CD4-positive, alpha-beta memory T cell (primary cell): ENCODE measurements at regions of chr7 and their contacts with region 1.

Region 1: DNA sequence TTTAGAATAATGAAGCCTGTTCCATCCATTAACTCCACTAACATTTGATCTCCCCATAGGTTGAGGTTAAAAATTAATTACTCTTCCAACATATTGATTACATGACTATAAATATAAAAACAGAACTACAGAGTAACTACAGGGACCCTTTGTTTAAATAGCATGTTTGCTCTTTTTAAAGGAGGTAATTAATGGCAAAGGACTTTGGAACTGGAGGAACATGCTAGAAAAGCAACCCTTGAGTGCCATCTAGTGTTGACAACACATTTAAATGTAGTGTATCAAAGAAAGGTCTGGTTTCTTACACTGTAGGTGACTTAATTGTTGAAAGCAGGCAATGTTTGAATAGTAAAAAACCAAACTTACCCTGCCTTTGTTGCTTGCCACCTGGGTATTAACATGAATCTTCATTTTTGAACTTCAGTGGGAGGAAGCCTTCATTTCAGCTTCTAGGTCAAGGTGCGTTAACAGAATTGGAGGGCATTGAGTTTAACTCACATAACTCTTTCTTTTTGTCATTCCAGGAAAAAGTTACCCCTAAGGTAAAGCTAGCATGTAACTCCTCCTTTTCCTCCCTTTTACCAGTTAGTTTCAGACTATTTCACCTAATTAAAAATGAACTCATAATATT is 52.6 kb upstream of the CAPZA2 start:
- DNase-seq: peak in 4 of 5 donors; percentile 16 to 34 (median 25)
- H3K4me3 ChIP-seq: no peak overlapping the region
- H3K4me3 Mint-ChIP-seq: no peak overlapping the region
- H3K27ac ChIP-seq: no peak overlapping the region
- H3K27ac Mint-ChIP-seq: no peak overlapping the region
- H3K4me1 ChIP-seq: no peaks in the 10 kb centered on the region
- H3K4me1 Mint-ChIP-seq: no peaks in the 10 kb centered on the region
- H3K27me3 ChIP-seq: no peaks in the 10 kb centered on the region
- H3K27me3 Mint-ChIP-seq: no peaks in the 10 kb centered on the region

Region 2: GRCh38 chr7:116138202-116138801 is 671.4 kb before region 1 on chr7:
- CTCF ChIA-PET with region 1: no interaction called
- POLR2A ChIA-PET with region 1: no interaction called
- intact Hi-C with region 1: loop called (anchors 1 kb)
- DNase-seq: peak in 4 of 5 donors; percentile 31 to 40 (median 34)
- H3K4me3 ChIP-seq: no peak overlapping the region
- H3K4me3 Mint-ChIP-seq: no peak overlapping the region
- H3K27ac ChIP-seq: no peak overlapping the region
- H3K27ac Mint-ChIP-seq: no peak overlapping the region
- H3K4me1 ChIP-seq: peaks cover 3% of the 10 kb centered on the region
- H3K4me1 Mint-ChIP-seq: peaks cover 5 to 10% (median 6%) of the 10 kb centered on the region in 4 donors
- H3K27me3 ChIP-seq: no peaks in the 10 kb centered on the region
- H3K27me3 Mint-ChIP-seq: peaks cover 2 to 7% of the 10 kb centered on the region in 2 donors

Region 3: DNA sequence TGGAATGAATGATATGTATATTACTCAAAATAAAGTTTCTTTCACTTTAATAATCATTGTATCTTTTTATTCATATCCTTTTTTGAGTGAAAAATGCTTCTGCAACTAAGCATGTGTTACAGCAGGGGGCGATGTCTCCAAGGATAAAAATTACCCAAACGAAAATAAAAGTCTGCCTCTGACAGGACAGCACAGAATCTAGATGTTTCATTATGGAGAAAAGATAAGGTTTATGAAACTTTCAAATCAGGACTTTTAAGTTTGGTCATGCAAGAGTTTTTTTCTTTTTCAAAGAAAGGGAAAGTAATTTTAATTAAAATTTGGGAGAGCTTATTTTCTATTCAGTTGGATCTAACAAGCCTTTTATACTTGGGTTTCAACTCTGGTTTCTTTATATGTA is 551.0 kb before region 1 on chr7:
- CTCF ChIA-PET with region 1: no interaction called
- POLR2A ChIA-PET with region 1: no interaction called
- intact Hi-C with region 1: loop called (anchors 1 kb)
- DNase-seq: peak in 4 of 5 donors; percentile 31 to 51 (median 40)
- H3K4me3 ChIP-seq: no peak overlapping the region
- H3K4me3 Mint-ChIP-seq: no peak overlapping the region
- H3K27ac ChIP-seq: no peak overlapping the region
- H3K27ac Mint-ChIP-seq: peak overlapping the region in 5 of 7 donors; percentile 2 to 72 (median 58)
- H3K4me1 ChIP-seq: no peaks in the 10 kb centered on the region
- H3K4me1 Mint-ChIP-seq: peaks cover 2 to 11% (median 7%) of the 10 kb centered on the region in 4 donors
- H3K27me3 ChIP-seq: no peaks in the 10 kb centered on the region
- H3K27me3 Mint-ChIP-seq: no peaks in the 10 kb centered on the region

Region 4: GRCh38 chr7:116762971-116763370 is 46.8 kb before region 1 on chr7:
- CTCF ChIA-PET with region 1: no interaction called
- POLR2A ChIA-PET with region 1: no interaction called
- intact Hi-C with region 1: no loop called
- DNase-seq: no peak
- H3K4me3 ChIP-seq: no peak overlapping the region
- H3K4me3 Mint-ChIP-seq: no peak overlapping the region
- H3K27ac ChIP-seq: no peak overlapping the region
- H3K27ac Mint-ChIP-seq: no peak overlapping the region
- H3K4me1 ChIP-seq: no peaks in the 10 kb centered on the region
- H3K4me1 Mint-ChIP-seq: no peaks in the 10 kb centered on the region
- H3K27me3 ChIP-seq: no peaks in the 10 kb centered on the region
- H3K27me3 Mint-ChIP-seq: peaks cover 2 to 4% of the 10 kb centered on the region in 2 donors

Region 5: GRCh38 chr7:116851671-116852070 is 41.9 kb after region 1 on chr7:
- CTCF ChIA-PET with region 1: no interaction called
- POLR2A ChIA-PET with region 1: no interaction called
- intact Hi-C with region 1: no loop called
- DNase-seq: no peak
- H3K4me3 ChIP-seq: no peak overlapping the region
- H3K4me3 Mint-ChIP-seq: no peak overlapping the region
- H3K27ac ChIP-seq: no peak overlapping the region
- H3K27ac Mint-ChIP-seq: no peak overlapping the region
- H3K4me1 ChIP-seq: no peaks in the 10 kb centered on the region
- H3K4me1 Mint-ChIP-seq: peaks cover 0 to 5% (median 0%) of the 10 kb centered on the region in 4 donors
- H3K27me3 ChIP-seq: no peaks in the 10 kb centered on the region
- H3K27me3 Mint-ChIP-seq: peaks cover 12 to 18% of the 10 kb centered on the region in 2 donors